CD8-positive, alpha-beta T cell (primary cell): ENCODE measurements at regions of chr1 and their contacts with region 1.

Region 1: GRCh38 chr1:87292684-87293493 is 35.8 kb upstream of the LMO4 start:
- DNase-seq: peak; percentile 24 to 77 (median 67)
- ATAC-seq: no peak
- H3K4me3 ChIP-seq: no peak overlapping the region
- H3K4me3 Mint-ChIP-seq: no peak overlapping the region
- H3K27ac ChIP-seq: no peak overlapping the region
- H3K27ac Mint-ChIP-seq: no peak overlapping the region
- H3K4me1 ChIP-seq: no peaks in the 10 kb centered on the region
- H3K4me1 Mint-ChIP-seq: no peaks in the 10 kb centered on the region
- H3K27me3 ChIP-seq: no peaks in the 10 kb centered on the region
- H3K27me3 Mint-ChIP-seq: peaks cover 6% of the 10 kb centered on the region
- CTCF ChIP-seq: peak; percentile 86

Region 2: GRCh38 chr1:87131809-87132283 is 161.0 kb before region 1 on chr1:
- CTCF ChIA-PET with region 1: interaction called, 4 read pairs
- POLR2A ChIA-PET with region 1: no interaction called
- intact Hi-C with region 1: loop called in 1 of 2 experiments (anchors 10 kb)
- DNase-seq: peak; percentile 43 to 83 (median 75)
- ATAC-seq: peak; percentile 90
- H3K4me3 ChIP-seq: peak overlapping the region; percentile 50 to 85
- H3K4me3 Mint-ChIP-seq: peak overlapping the region; percentile 88
- H3K27ac ChIP-seq: no peak overlapping the region
- H3K27ac Mint-ChIP-seq: no peak overlapping the region
- H3K4me1 ChIP-seq: peaks cover 7% of the 10 kb centered on the region
- H3K4me1 Mint-ChIP-seq: peaks cover 12% of the 10 kb centered on the region
- H3K27me3 ChIP-seq: peaks cover 4 to 6% of the 10 kb centered on the region in 2 experiments
- H3K27me3 Mint-ChIP-seq: peaks cover 39% of the 10 kb centered on the region
- CTCF ChIP-seq: peak; percentile 91

Region 3: DNA sequence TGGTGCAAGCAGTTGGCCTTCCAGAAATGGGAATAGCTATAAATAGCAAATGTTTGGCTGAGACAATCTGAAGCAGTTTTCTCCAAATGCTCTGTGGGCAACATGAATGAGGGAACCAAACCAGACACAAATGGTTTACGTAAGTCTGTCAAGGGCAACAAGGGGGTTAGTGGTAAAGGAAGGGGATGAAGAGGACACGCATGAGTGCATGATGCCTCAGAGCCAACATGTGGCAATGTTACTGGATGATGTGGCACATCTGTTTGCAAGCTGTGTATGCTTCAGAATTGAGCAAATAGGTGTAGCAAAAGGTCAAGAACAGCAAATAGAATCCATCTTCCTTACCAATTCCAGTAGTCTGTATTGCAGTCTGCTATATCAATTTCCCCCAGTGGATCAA is 40.5 kb before region 1 on chr1:
- CTCF ChIA-PET with region 1: no interaction called
- POLR2A ChIA-PET with region 1: no interaction called
- intact Hi-C with region 1: no loop called
- DNase-seq: no peak
- ATAC-seq: no peak
- H3K4me3 ChIP-seq: no peak overlapping the region
- H3K4me3 Mint-ChIP-seq: no peak overlapping the region
- H3K27ac ChIP-seq: no peak overlapping the region
- H3K27ac Mint-ChIP-seq: no peak overlapping the region
- H3K4me1 ChIP-seq: no peaks in the 10 kb centered on the region
- H3K4me1 Mint-ChIP-seq: no peaks in the 10 kb centered on the region
- H3K27me3 ChIP-seq: no peaks in the 10 kb centered on the region
- H3K27me3 Mint-ChIP-seq: peaks cover 15% of the 10 kb centered on the region
- CTCF ChIP-seq: no peak

Region 4: DNA sequence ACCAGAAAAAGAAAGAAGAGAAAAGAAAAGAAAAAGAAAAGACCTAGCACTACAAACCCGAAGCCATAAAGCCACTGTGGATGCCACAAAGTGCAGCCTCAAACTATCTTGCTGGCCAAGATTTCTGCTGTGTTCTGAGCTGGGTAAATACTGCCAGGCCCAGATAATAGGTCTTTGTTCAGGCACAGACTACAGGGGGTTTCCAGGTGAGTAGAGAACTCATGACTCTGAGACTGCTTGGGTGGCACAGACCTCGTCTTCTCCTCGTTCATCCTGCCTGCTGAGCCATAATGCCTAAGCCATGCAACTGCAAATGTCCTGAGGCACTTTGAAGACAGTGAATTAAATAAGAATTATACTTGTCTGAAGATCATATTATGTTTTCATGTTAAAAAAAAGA is 687.6 kb after region 1 on chr1:
- CTCF ChIA-PET with region 1: no interaction called
- POLR2A ChIA-PET with region 1: no interaction called
- intact Hi-C with region 1: no loop called
- DNase-seq: no peak
- ATAC-seq: no peak
- H3K4me3 ChIP-seq: no peak overlapping the region
- H3K4me3 Mint-ChIP-seq: no peak overlapping the region
- H3K27ac ChIP-seq: no peak overlapping the region
- H3K27ac Mint-ChIP-seq: no peak overlapping the region
- H3K4me1 ChIP-seq: no peaks in the 10 kb centered on the region
- H3K4me1 Mint-ChIP-seq: no peaks in the 10 kb centered on the region
- H3K27me3 ChIP-seq: no peaks in the 10 kb centered on the region
- H3K27me3 Mint-ChIP-seq: peaks cover 16% of the 10 kb centered on the region
- CTCF ChIP-seq: no peak

Region 5: GRCh38 chr1:88061492-88062177 is 768.7 kb after region 1 on chr1:
- CTCF ChIA-PET with region 1: no interaction called
- POLR2A ChIA-PET with region 1: no interaction called
- intact Hi-C with region 1: loop called in 1 of 2 experiments (anchors 5 kb)
- DNase-seq: peak in 2 of 9 experiments; percentile 12 to 20
- ATAC-seq: no peak
- H3K4me3 ChIP-seq: no peak overlapping the region
- H3K4me3 Mint-ChIP-seq: no peak overlapping the region
- H3K27ac ChIP-seq: no peak overlapping the region
- H3K27ac Mint-ChIP-seq: no peak overlapping the region
- H3K4me1 ChIP-seq: no peaks in the 10 kb centered on the region
- H3K4me1 Mint-ChIP-seq: no peaks in the 10 kb centered on the region
- H3K27me3 ChIP-seq: no peaks in the 10 kb centered on the region
- H3K27me3 Mint-ChIP-seq: peaks cover 4% of the 10 kb centered on the region
- CTCF ChIP-seq: no peak